ENCODE measurements at regions of chr10 and their contacts with region 1.

Region 1: DNA sequence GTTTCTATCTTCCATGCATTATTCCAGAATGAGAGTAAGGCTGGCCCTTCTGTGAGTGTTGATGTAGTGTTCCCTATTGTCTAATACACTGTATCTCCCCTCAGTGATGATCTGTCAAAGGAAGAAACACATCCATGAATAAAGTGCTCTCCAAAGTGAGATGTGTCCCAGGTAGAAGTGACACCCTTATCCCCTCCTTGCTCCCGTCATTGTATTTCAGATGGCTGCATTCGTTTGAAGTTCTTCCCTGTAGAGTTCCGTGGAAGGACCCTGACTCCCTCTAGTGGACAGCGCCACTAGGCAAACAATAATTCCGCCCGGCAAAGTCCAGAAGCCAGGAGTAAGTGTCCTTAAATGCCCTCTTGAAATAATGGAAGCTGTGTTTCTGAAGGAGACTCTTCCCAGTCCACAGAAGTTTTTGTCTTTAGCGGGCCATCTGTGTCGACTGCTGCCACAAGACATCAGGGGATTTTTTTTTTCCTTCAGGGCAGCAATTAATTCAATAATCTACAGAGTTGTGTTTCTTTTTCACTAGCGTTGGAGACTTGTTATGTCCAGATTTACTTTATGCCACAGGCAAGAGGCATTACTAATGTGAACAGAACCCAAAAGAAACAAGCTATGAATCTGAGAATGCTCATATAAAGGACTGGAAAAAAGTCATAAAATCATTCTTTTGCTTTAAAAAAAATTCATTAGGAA is 64.6 kb downstream of the THNSL1 start:
- DNase-seq: peak; percentile 75
- ATAC-seq: peak; percentile 98

Region 2: DNA sequence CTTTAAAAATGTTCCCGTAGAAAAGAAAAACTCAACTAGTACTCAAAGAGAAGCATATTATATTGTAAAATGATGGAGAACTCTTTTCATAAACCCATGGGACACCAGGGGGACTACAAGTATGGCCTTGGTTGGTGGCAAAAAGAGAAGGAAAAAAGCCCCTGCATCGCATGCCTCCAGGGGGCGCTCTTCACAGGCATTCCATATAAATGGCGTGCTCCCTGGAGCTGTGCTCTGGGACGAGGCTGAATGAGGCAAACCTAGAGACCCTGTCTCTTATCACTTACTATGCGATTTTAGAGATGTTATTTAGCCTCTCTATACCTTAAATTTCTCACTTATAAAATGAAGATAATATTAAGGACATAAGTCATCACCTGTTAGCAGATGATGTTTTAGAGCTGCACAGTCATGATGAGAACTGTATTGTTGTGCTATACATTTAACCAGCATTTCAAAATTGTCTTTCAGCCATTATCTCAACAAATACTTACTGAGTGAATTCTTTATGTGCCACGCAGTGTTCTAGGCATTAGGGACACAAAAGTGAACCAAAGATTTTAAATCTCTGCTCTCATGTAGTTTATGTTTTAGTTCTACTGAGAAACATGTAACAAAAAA is 463.1 kb before region 1 on chr10:
- intact Hi-C with region 1: loop called (anchors 5 kb)
- DNase-seq: peak; percentile 74
- ATAC-seq: peak; percentile 74

Region 3: GRCh38 chr10:24642622-24643417 is 438.2 kb before region 1 on chr10:
- intact Hi-C with region 1: loop called (anchors 10 kb)
- DNase-seq: no peak
- ATAC-seq: peak; percentile 94

Region 4: DNA sequence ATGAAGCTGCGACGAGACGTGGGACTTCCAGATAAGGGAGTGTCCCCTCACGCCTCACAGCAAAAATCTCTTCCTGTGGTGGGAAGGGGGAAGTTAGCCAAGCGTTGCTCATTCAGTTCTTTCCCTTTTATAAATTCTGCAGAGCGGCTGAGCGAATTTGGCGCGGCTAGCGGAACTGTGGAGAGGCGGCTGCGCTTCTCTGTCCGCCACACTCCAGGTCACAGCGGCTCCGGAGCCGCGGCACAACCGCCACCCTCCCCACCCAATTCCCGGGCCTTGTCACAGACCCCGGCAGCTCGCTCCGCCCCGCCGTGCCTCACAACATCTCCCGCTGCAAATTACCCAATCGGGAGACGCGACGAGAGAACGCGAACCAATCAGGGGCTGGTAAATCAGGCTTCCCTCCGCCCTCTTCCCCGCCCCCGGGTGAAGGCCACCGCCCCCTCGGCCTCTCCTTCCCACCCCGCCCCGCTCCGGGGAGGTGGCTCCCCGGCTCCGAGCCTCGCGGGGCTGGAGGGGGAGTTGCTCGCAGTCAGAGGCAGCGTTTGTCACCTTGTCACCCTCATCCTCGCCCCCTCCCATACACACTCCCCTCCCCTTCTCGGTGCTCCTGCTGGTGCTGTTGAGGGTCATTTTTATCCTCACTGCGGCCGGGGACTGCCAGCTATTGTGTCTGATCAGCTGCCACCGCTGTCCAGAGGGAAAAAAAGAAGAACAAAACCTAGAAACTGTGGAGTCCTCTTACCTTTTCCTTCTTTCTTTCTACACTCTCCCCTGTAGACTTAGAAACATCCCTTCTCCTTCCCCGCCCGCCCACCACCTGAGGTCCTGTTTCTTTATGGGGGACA is 356.4 kb before region 1 on chr10:
- intact Hi-C with region 1: loop called (anchors 10 kb)
- DNase-seq: peak; percentile 99
- ATAC-seq: peak; percentile 93

Region 5: DNA sequence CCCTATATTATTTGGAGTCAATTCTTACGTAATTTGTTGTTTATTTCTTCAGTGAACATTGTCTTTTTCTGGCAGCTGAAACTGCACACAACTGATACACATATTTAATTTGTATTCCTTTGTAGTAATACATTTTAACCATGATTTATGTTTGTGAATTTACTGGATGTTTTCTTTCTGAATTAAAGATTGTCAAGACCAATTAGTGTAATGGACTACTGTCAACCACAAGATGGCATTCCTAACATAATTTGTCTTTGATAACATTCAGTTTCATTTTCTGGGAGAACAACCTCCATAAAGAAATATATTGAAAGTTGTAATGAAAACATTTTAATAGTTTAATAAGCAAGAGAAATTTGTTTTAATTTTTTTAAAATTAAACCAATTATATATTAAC is 54.6 kb before region 1 on chr10:
- intact Hi-C with region 1: loop called (anchors 5 kb)
- DNase-seq: no peak
- ATAC-seq: no peak

Region 6: DNA sequence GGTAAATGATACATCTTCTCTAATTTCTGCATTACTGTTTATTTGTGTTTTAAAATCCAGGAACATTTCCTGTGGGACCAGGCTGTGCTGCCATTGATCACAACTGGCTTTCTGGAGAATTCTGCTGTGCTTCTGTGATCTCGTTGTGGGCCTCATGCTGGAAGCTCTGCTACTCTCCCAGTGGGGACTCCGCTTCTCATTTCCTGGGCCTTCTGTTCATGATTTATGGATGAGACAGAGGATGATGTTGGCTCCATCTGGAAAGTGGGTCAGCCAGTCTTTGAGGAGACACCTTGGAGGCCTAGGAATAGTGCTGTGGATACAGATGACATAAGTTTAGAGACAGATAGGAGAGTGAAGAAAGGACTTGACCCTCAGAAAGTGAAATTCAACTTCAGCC is 78.6 kb after region 1 on chr10:
- intact Hi-C with region 1: no loop called
- DNase-seq: no peak
- ATAC-seq: no peak